Sigmoid colon (tissue), 7 donors: ENCODE measurements at regions of chrX and their contacts with region 1.

Region 1: GRCh38 chrX:12447448-12448064 is 309.3 kb downstream of the FRMPD4 start:
- DNase-seq: peak; percentile 65
- H3K4me3 ChIP-seq: no peak overlapping the region
- H3K27ac ChIP-seq: no peak overlapping the region
- H3K4me1 ChIP-seq: no peaks in the 10 kb centered on the region
- H3K27me3 ChIP-seq: no peaks in the 10 kb centered on the region
- CTCF ChIP-seq: no peak
- EP300 ChIP-seq: peak in 1 of 4 donors; percentile 37
- POLR2A ChIP-seq: no peak

Region 2: GRCh38 chrX:12138361-12139313 is 308.9 kb before region 1 on chrX and contains the start of gene FRMPD4:
- intact Hi-C with region 1: loop called (anchors 5 kb)
- DNase-seq: peak; percentile 76
- H3K4me3 ChIP-seq: peak within 1 kb of the TSS; percentile 39 to 57 (median 50)
- H3K27ac ChIP-seq: peak within 1 kb of the TSS in 3 of 4 donors; percentile 47 to 63 (median 53)
- H3K4me1 ChIP-seq: no peaks in the 10 kb centered on the region
- H3K27me3 ChIP-seq: no peaks in the 10 kb centered on the region
- CTCF ChIP-seq: peak in 2 of 4 experiments; percentile 12 to 34
- EP300 ChIP-seq: no peak
- POLR2A ChIP-seq: no peak
- total RNA-seq, gene FRMPD4: 1.4 to 5.8 (median 3.9) TPM

Region 3: GRCh38 chrX:12210196-12210815 is 237.2 kb before region 1 on chrX:
- intact Hi-C with region 1: loop called (anchors 10 kb)
- DNase-seq: peak; percentile 87
- H3K4me3 ChIP-seq: no peak overlapping the region
- H3K27ac ChIP-seq: peak overlapping the region in 3 of 4 donors; percentile 57 to 78 (median 63)
- H3K4me1 ChIP-seq: peaks cover 0 to 16% (median 0%) of the 10 kb centered on the region in 4 donors
- H3K27me3 ChIP-seq: no peaks in the 10 kb centered on the region
- CTCF ChIP-seq: no peak
- EP300 ChIP-seq: no peak
- POLR2A ChIP-seq: no peak

Region 4: DNA sequence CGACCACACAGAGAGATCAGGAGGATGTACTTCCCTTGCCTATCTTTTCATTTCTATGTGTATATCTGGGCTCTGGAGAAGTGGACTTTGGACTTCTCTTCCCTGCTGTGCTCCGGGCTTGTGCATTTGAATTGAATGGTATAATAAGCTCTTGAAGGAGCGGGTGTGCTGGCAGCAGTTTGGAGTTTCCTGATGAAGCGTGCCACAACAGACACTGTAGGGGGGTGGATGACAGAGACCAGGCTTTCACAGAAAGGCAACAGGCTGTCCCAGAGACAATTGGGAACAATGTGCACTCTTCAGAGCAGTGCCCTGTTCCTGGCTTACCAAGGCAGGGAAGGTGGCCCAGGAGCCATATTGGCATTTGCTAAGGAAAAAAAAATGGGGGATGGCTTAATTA is 139.1 kb before region 1 on chrX:
- intact Hi-C with region 1: loop called (anchors 5 kb)
- DNase-seq: peak; percentile 77
- H3K4me3 ChIP-seq: no peak overlapping the region
- H3K27ac ChIP-seq: peak overlapping the region in 3 of 4 donors; percentile 48 to 63 (median 53)
- H3K4me1 ChIP-seq: no peaks in the 10 kb centered on the region
- H3K27me3 ChIP-seq: no peaks in the 10 kb centered on the region
- CTCF ChIP-seq: no peak
- EP300 ChIP-seq: peak in 3 of 4 donors; percentile 6 to 65 (median 26)
- POLR2A ChIP-seq: no peak

Region 5: DNA sequence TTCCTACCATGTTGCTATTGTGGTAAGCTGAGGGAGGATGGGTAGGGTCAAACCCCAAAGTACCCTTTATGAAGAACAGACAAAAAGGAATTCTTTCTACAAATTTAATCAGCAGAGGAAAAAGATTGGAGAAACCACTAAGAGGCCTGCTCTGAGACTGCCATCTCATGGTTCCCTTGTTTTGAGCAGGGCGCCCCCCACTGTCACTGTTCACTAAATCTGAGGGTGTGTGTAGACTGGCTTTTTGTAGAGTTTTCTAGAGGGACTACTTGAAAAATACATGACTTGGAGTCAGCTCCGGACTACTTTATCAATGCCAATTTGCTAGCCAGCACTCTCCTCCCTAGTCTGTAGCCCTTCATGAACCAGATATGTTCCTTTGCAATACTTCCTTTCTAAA is 15.5 kb after region 1 on chrX:
- intact Hi-C with region 1: no loop called
- DNase-seq: no peak
- H3K4me3 ChIP-seq: no peak overlapping the region
- H3K27ac ChIP-seq: no peak overlapping the region
- H3K4me1 ChIP-seq: no peaks in the 10 kb centered on the region
- H3K27me3 ChIP-seq: no peaks in the 10 kb centered on the region
- CTCF ChIP-seq: no peak
- EP300 ChIP-seq: no peak
- POLR2A ChIP-seq: no peak

Region 6: DNA sequence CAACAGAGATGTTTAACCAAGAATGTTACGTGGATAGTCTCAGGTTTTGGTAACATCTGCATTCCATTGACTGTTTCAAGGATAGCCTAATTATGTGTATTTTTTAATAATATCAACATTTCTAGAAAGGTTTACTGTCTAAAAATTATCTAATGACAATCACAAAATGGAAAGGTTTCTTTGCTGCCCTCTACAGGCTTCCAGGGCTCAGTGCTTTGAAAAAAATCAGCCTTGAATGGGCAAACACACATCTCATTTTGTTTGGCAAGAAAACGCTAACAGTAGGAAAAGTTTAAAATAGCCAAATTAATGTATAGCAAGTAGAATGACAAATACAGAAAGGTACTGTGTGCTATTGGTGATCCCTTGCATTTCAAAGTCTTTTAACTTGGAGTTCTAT is 120.3 kb after region 1 on chrX:
- intact Hi-C with region 1: no loop called
- DNase-seq: no peak
- H3K4me3 ChIP-seq: no peak overlapping the region
- H3K27ac ChIP-seq: no peak overlapping the region
- H3K4me1 ChIP-seq: no peaks in the 10 kb centered on the region
- H3K27me3 ChIP-seq: no peaks in the 10 kb centered on the region
- CTCF ChIP-seq: peak in 2 of 4 experiments; percentile 19 to 48
- EP300 ChIP-seq: no peak
- POLR2A ChIP-seq: no peak